ENCODE measurements at regions of chr14 and their contacts with region 1.

Region 1: GRCh38 chr14:35883677-35884293 is 57.6 kb downstream of the BRMS1L start:
- DNase-seq: peak; percentile 53
- H3K4me3 Mint-ChIP-seq: no peak overlapping the region
- H3K27ac Mint-ChIP-seq: no peak overlapping the region
- H3K4me1 Mint-ChIP-seq: peaks cover 5% of the 10 kb centered on the region
- H3K27me3 Mint-ChIP-seq: peaks cover 13% of the 10 kb centered on the region

Region 2: GRCh38 chr14:35944847-35945246 is 61.1 kb after region 1 on chr14:
- CTCF ChIA-PET with region 1: interaction called, 30 read pairs
- DNase-seq: peak; percentile 38
- H3K4me3 Mint-ChIP-seq: no peak overlapping the region
- H3K27ac Mint-ChIP-seq: no peak overlapping the region
- H3K4me1 Mint-ChIP-seq: peaks cover 12% of the 10 kb centered on the region
- H3K27me3 Mint-ChIP-seq: no peaks in the 10 kb centered on the region